Activated T-helper 1 cell treated with anti-CD3 and anti-CD28 coated beads, Interleukin-12 subunit alpha, Interleukin-12 subunit beta, Interleukin-2, Interleukin-4 antibody, amounts not matched to agents 30 ng/mL and 10 ng/mL and 1 ng/mL, durations not matched to agents 14 hours and 24 hours and 36 hours (primary cell): ENCODE measurements at regions of chr7 and their contacts with region 1.

Region 1: GRCh38 chr7:142669074-142669654 is 80.1 kb upstream of the PRSS1 start:
- DNase-seq: no peak
- H3K4me3 Mint-ChIP-seq: no peak overlapping the region
- H3K27ac Mint-ChIP-seq: no peak overlapping the region
- H3K4me1 Mint-ChIP-seq: peaks cover 22% of the 10 kb centered on the region
- H3K27me3 Mint-ChIP-seq: no peaks in the 10 kb centered on the region

Region 2: GRCh38 chr7:142626420-142627035 is 42.6 kb before region 1 on chr7:
- intact Hi-C with region 1: no loop called
- DNase-seq: peak; percentile 40
- H3K4me3 Mint-ChIP-seq: peak overlapping the region; percentile 85
- H3K27ac Mint-ChIP-seq: peak overlapping the region; percentile 82
- H3K4me1 Mint-ChIP-seq: no peaks in the 10 kb centered on the region
- H3K27me3 Mint-ChIP-seq: peaks cover 18% of the 10 kb centered on the region

Region 3: DNA sequence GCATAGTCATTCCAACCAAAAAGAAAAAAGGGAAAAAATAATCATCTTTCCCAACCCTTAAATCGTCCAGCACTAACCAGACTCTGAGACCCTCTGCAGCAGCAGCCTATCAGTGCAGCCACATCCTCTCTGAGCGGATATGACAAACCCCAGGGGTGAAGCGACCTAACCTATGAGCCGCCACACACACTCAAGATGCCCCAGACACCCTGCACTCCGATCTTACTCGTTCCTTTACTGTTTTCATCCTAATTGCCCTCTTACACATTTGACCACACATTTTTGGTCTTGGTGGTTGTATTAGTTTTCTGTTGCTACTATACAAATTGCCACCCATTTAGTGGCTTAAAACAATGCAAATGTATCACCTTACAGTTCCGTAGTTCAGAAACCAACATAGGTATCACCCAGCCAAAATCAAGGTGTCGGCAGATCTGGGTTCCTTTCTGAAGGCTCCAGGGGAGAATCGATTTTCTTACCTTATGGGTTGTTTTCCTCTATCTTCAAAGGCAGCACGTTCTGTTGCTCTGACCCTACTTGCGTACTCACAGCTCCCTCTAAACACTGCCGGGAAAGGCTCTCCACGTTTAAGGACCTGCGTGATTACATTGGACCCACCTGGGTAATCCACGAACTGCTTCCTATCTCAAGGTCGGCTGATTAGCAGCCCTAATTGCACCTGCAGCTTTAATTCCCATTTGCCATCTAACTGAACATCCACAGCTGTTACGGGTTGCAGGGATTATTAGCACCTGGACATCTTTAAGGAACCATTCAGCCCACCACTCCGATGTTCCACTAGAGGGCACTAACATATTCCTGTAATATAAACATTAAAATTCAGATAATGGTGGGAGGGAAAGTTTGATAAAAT is 42.8 kb after region 1 on chr7:
- intact Hi-C with region 1: loop called (anchors 5 kb)
- DNase-seq: peak; percentile 2
- H3K4me3 Mint-ChIP-seq: peak overlapping the region; percentile 78
- H3K27ac Mint-ChIP-seq: peak overlapping the region; percentile 85
- H3K4me1 Mint-ChIP-seq: peaks cover 66% of the 10 kb centered on the region
- H3K27me3 Mint-ChIP-seq: no peaks in the 10 kb centered on the region